ENCODE measurements at regions of chr11 and their contacts with region 1.

Region 1: DNA sequence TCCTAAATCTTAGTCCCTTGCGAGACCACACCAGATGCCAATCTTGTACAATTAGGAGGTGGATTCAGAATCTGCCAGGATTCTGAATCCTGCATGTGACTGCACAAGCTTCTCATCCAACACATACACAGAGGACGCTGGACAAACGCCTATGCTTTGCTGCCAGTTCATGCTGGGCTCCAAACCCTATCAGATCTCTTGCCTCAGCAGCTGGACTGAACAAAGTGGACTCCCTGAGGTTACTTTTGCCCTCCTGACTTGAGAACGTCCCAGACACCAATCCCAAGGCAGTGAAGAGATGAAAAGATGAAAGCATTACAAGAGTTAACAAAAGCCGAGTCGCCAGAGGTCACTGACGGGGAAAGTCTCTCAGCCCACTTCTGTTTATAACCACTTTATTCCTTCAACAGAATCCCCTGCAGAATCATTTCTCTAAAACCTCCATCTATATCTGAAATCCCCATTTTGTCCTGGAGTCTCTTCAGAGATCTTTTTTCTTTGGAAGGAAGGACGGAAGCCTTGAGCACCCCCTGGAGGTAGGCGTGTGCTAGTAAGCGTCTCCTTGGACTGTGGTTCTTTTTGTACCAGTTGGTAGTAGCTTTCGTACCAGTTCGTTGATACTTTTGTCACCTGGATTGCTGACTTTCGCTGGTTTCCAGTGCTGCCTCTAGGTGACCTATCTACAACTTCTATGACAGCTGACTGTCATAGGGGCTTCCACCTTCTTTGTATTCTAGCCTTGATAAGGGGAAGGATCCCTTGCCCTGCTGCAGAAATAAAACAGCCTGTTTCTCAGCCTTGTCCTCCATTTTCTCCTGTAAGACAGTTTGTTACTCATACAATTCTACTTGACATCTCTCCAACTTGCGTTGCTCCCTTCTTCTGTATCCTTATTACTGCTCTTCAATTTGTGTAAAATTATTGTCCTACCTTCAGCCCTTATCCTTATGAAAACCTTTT is 26.1 kb upstream of the EED start:
- DNase-seq: peak; percentile 76
- ATAC-seq: peak; percentile 63
- H3K4me3 ChIP-seq: peak overlapping the region; percentile 20; the same call in 1 of the 2 replicates
- H3K27ac ChIP-seq: peak overlapping the region; percentile 63
- H3K4me1 ChIP-seq: peaks cover 53% of the 10 kb centered on the region
- H3K27me3 ChIP-seq: no peaks in the 10 kb centered on the region
- CTCF ChIP-seq: peak; percentile 82 to 93 (median 92)
- EP300 ChIP-seq: no peak
- POLR2A ChIP-seq: no peak
- RAD21 ChIP-seq: peak; percentile 88

Region 2: DNA sequence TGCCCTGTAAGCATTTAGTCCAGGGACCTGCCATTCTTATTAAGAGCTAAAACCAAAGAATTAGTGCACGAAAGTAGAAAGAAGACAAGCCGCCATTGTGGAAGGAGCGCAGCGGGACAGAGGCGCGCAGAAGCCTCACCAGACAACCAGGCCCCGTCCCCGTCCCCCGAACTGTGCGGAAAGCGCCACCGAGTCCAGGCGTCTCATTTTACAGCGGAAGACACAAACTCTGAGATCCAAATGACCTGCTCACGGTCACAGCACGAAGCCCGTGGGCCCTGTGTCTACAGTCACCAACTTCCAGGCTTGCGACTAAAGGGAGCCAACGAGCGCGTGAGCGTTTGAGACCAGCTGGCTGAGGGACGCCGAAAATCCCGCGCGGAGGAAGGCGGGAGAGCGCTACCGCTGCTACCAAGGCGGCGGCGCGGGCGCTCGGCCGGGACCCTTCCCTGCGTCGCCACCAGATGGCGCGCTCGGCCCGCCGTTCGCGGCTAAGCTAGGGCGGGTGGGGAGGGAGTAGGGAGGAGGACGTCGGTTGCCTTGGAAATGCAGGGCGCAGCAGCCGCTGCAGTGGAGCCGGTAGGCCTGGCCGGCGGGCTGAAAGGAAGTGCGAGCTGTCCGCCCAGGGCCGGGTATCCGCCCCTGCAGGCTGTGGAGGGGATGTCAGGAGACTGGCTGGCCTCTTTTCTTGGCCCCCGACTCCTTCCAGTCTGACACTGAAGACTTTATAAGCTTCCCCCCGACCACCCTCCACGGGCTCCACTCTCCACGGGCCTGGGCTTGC is 363.7 kb before region 1 on chr11:
- CTCF ChIA-PET with region 1: interaction called, 6 read pairs
- POLR2A ChIA-PET with region 1: no interaction called
- RAD21 ChIA-PET with region 1: interaction called, 3 read pairs
- SMC1A ChIA-PET with region 1: interaction called, 3 read pairs
- in situ Hi-C with region 1: no loop called
- intact Hi-C with region 1: loop called (anchors 10 kb)
- DNase-seq: peak; percentile 57
- ATAC-seq: peak; percentile 100
- H3K4me3 ChIP-seq: peak overlapping the region; percentile 75
- H3K27ac ChIP-seq: peak overlapping the region; percentile 27; the same call in 1 of the 2 replicates
- H3K4me1 ChIP-seq: peaks cover 8% of the 10 kb centered on the region
- H3K27me3 ChIP-seq: no peaks in the 10 kb centered on the region
- CTCF ChIP-seq: peak; percentile 77 to 95 (median 82)
- EP300 ChIP-seq: no peak
- POLR2A ChIP-seq: peak; percentile 71
- RAD21 ChIP-seq: peak; percentile 83

Region 3: GRCh38 chr11:86041975-86042378 is 176.4 kb before region 1 on chr11:
- CTCF ChIA-PET with region 1: interaction called, 103 read pairs
- POLR2A ChIA-PET with region 1: interaction called, 3 read pairs
- RAD21 ChIA-PET with region 1: interaction called, 39 read pairs
- SMC1A ChIA-PET with region 1: interaction called, 78 read pairs
- in situ Hi-C with region 1: no loop called
- intact Hi-C with region 1: loop called (anchors 1 kb)
- DNase-seq: peak; percentile 60
- ATAC-seq: peak; percentile 83
- H3K4me3 ChIP-seq: no peak overlapping the region
- H3K27ac ChIP-seq: no peak overlapping the region
- H3K4me1 ChIP-seq: peaks cover 42% of the 10 kb centered on the region
- H3K27me3 ChIP-seq: no peaks in the 10 kb centered on the region
- CTCF ChIP-seq: peak; percentile 77 to 89 (median 81)
- EP300 ChIP-seq: no peak
- POLR2A ChIP-seq: no peak
- RAD21 ChIP-seq: peak; percentile 97

Region 4: DNA sequence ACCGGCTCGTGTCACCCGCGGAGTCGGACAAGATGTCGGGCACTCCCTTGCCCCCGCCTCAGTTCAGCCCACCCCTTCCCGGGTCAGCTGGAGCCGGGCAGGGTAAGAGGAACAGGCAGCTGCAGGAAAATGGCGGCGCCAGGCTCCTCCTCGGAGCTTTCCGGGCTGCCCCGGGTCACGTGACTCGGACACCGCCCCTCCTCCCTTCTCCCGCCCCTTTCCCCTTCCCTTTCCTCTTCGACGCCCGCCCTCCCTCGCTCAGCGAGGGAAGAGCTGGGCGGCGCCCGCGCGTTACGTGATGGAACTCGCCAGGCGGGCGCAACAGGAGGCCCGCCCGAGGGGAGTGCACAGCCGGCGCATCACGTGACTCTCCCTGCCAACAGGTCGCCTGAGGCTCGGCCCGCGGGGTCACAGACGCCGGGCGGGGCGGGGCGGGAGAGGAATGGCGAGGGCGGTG is 149.4 kb before region 1 on chr11 and contains the start of gene PICALM:
- CTCF ChIA-PET with region 1: interaction called, 14 read pairs
- POLR2A ChIA-PET with region 1: interaction called, 6 read pairs
- RAD21 ChIA-PET with region 1: interaction called, 28 read pairs
- SMC1A ChIA-PET with region 1: interaction called, 17 read pairs
- in situ Hi-C with region 1: no loop called
- intact Hi-C with region 1: loop called (anchors 1 kb)
- DNase-seq: peak; percentile 97
- ATAC-seq: peak; percentile 80
- H3K4me3 ChIP-seq: peak within 1 kb of the TSS; percentile 95
- H3K27ac ChIP-seq: peak within 1 kb of the TSS; percentile 99
- H3K4me1 ChIP-seq: peaks cover 10% of the 10 kb centered on the region
- H3K27me3 ChIP-seq: no peaks in the 10 kb centered on the region
- CTCF ChIP-seq: no peak
- EP300 ChIP-seq: peak in 1 of 2 experiments; percentile 14; a peak in 1 of 4 replicates
- POLR2A ChIP-seq: peak; percentile 81
- RAD21 ChIP-seq: no peak
- polyA plus RNA-seq, gene PICALM: 4.3 to 10.4 TPM

Region 5: DNA sequence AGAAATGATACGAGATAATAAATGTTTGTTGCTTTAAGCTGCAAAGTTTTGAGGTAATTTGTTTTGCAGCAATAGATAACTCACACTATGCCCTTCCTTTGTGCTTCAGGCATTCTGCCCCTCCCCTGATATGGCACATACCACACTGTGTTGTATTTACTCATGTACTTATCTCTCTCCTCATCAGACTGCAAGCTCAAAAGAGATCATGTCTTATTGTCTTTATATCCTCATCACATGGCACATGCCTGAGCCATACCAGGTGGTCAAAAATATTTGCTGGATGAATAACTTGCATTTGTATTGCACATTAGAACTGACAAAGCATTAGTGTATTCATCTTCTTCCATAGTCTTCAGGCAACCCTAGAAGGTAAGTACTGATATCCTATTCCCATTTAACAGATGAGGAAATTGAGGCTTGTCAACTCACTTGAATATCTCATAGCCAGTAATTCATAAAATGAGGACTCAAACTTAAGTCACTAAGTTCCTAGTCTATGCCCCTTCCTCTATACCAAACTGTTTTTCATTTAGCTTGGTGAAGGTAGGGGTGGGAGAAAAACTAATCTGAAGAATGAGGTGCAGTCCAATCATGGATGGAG is 57.8 kb before region 1 on chr11:
- CTCF ChIA-PET with region 1: no interaction called
- POLR2A ChIA-PET with region 1: no interaction called
- RAD21 ChIA-PET with region 1: no interaction called
- SMC1A ChIA-PET with region 1: no interaction called
- in situ Hi-C with region 1: no loop called
- intact Hi-C with region 1: no loop called
- DNase-seq: no peak
- ATAC-seq: no peak
- H3K4me3 ChIP-seq: no peak overlapping the region
- H3K27ac ChIP-seq: no peak overlapping the region
- H3K4me1 ChIP-seq: peaks cover 22% of the 10 kb centered on the region
- H3K27me3 ChIP-seq: no peaks in the 10 kb centered on the region
- CTCF ChIP-seq: no peak
- EP300 ChIP-seq: no peak
- POLR2A ChIP-seq: no peak
- RAD21 ChIP-seq: no peak

Region 6: DNA sequence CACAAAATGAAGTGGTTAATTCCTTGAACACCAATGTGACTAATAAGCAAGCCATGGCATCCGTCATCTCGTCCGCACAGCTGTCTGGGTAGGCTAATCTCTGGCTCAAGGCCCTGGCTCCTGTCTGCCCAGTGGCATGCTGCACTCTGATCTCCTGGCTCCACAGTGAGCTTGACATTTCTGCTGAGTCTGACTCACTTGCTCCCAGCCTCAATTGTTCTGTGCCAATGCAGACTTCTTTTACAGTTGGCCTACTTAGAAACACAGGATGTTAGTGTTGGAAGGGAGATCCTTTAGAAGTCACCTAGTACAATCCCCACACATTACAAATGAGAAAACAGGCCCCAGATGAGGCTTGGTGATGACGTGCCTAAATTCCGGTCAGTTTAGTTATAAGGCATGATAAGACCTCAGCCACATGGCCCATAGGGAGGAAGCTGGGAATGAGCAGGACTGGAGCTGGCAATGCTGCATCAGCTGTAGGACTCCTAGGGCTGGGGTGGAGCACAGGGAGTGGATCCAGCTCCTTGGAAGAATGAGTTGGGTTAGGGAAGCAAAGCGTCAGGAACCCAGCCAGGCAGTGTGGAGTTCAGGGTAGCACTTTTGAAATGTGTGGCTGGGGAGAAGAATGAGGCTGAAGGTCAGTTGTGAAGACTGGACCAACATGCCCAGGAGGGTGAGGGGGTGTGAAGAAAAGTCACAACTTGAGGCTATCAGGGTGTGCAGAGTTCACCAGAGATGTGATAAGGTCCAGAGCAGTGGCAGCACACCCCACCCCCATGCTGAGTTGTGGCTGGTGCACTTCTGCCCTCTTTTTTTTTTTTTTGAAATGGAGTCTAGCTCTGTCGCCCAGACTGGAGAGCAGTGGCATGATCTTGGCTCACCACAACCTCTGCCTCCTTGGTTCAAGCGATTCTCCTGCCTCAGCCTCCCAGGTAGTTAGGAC is 44.0 kb before region 1 on chr11:
- CTCF ChIA-PET with region 1: no interaction called
- POLR2A ChIA-PET with region 1: no interaction called
- RAD21 ChIA-PET with region 1: no interaction called
- SMC1A ChIA-PET with region 1: no interaction called
- in situ Hi-C with region 1: no loop called
- intact Hi-C with region 1: no loop called
- DNase-seq: no peak
- ATAC-seq: no peak
- H3K4me3 ChIP-seq: no peak overlapping the region
- H3K27ac ChIP-seq: no peak overlapping the region
- H3K4me1 ChIP-seq: no peaks in the 10 kb centered on the region
- H3K27me3 ChIP-seq: no peaks in the 10 kb centered on the region
- CTCF ChIP-seq: no peak
- EP300 ChIP-seq: no peak
- POLR2A ChIP-seq: no peak
- RAD21 ChIP-seq: no peak

Region 7: GRCh38 chr11:86202013-86202336 is 16.4 kb before region 1 on chr11:
- CTCF ChIA-PET with region 1: interaction called, 15 read pairs
- POLR2A ChIA-PET with region 1: interaction called, 3 read pairs
- RAD21 ChIA-PET with region 1: interaction called, 12 read pairs
- SMC1A ChIA-PET with region 1: interaction called, 22 read pairs
- in situ Hi-C with region 1: no loop called
- intact Hi-C with region 1: no loop called
- DNase-seq: no peak
- ATAC-seq: peak; percentile 85
- H3K4me3 ChIP-seq: peak overlapping the region; percentile 66
- H3K27ac ChIP-seq: peak overlapping the region; percentile 82
- H3K4me1 ChIP-seq: peaks cover 15% of the 10 kb centered on the region
- H3K27me3 ChIP-seq: no peaks in the 10 kb centered on the region
- CTCF ChIP-seq: no peak
- EP300 ChIP-seq: no peak
- POLR2A ChIP-seq: no peak
- RAD21 ChIP-seq: no peak

Region 8: DNA sequence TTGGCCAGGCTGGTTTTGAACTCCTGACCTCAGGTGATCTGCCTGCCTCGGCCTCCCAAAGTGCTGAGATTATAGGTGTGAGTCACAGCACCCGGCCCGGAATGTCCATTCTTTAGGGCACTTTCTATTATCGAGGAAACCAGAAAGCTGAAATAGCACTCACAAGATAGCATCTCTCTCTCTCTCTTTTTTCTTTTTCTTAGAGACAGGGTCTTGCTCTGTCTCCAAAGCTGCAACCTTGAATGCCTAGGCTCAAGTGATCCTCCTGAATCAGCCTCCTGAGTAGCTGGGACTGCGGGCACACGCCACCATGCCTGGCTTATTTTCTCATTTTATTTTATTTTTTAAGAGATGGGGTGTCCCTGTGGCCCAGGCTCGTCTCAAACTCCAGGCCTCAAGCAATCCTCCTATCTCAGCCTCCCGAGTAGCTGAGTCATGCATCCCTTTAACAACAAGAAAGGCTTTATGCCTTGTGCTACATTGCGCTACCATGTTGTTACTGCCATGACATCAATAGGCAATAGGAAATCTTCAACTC is 18.9 kb after region 1 on chr11:
- CTCF ChIA-PET with region 1: interaction called, 10 read pairs
- POLR2A ChIA-PET with region 1: interaction called, 7 read pairs
- RAD21 ChIA-PET with region 1: interaction called, 3 read pairs
- SMC1A ChIA-PET with region 1: interaction called, 21 read pairs
- in situ Hi-C with region 1: no loop called
- intact Hi-C with region 1: no loop called
- DNase-seq: no peak
- ATAC-seq: no peak
- H3K4me3 ChIP-seq: no peak overlapping the region
- H3K27ac ChIP-seq: no peak overlapping the region
- H3K4me1 ChIP-seq: no peaks in the 10 kb centered on the region
- H3K27me3 ChIP-seq: no peaks in the 10 kb centered on the region
- CTCF ChIP-seq: no peak
- EP300 ChIP-seq: no peak
- POLR2A ChIP-seq: no peak
- RAD21 ChIP-seq: no peak

Region 9: GRCh38 chr11:86291466-86292262 is 73.3 kb after region 1 on chr11:
- CTCF ChIA-PET with region 1: interaction called, 5 read pairs
- POLR2A ChIA-PET with region 1: no interaction called
- RAD21 ChIA-PET with region 1: interaction called, 7 read pairs
- SMC1A ChIA-PET with region 1: interaction called, 54 read pairs
- in situ Hi-C with region 1: no loop called
- intact Hi-C with region 1: loop called (anchors 2 kb)
- DNase-seq: peak; percentile 27
- ATAC-seq: peak; percentile 48
- H3K4me3 ChIP-seq: no peak overlapping the region
- H3K27ac ChIP-seq: no peak overlapping the region; the same call in 1 of the 2 replicates
- H3K4me1 ChIP-seq: peaks cover 41% of the 10 kb centered on the region
- H3K27me3 ChIP-seq: no peaks in the 10 kb centered on the region
- CTCF ChIP-seq: peak; percentile 70 to 79 (median 71)
- EP300 ChIP-seq: no peak
- POLR2A ChIP-seq: no peak
- RAD21 ChIP-seq: peak; percentile 95

Region 10: DNA sequence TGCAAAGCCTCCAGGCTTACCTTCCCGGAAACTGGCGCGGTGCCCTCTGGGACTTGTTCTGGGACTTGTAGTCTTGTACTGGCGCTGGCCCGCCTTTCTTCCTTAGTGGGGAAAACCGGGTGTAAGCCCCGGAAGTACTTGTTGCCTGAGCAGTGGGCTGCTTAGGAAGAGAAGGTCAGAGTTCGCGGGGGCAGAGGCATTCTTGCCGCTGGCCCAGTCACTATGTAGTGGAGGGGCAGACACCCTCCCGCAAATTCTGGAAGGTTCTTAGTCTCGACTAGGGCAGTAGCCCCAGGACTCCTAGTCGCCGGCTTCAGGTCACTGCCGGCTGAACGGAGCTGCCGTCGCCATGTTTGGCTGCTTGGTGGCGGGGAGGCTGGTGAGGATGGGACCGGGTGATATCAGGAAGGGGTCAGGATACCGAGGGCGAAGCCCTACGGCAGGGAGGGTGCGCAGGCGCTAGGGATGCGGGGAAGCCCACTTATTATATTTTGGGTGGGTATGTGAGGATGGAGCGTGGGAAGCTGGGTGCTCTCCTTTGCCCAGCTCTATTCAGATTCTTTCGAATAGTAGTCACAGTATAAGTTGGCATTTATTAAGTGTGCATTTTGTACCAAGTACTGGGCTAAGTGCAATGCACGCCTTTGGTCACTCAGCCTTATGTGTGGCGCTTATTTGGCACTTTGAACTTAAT is 83.8 kb after region 1 on chr11 and contains the start of gene HIKESHI:
- CTCF ChIA-PET with region 1: no interaction called
- POLR2A ChIA-PET with region 1: no interaction called
- RAD21 ChIA-PET with region 1: no interaction called
- SMC1A ChIA-PET with region 1: no interaction called
- in situ Hi-C with region 1: no loop called
- intact Hi-C with region 1: no loop called
- DNase-seq: peak; percentile 76
- ATAC-seq: peak; percentile 99
- H3K4me3 ChIP-seq: peak within 1 kb of the TSS; percentile 87
- H3K27ac ChIP-seq: peak within 1 kb of the TSS; percentile 87
- H3K4me1 ChIP-seq: 0 out of 2 replicates have a peak, but pooled peaks cover 3% of the 10 kb centered on the region
- H3K27me3 ChIP-seq: no peaks in the 10 kb centered on the region
- CTCF ChIP-seq: no peak
- EP300 ChIP-seq: no peak
- POLR2A ChIP-seq: peak; percentile 91
- RAD21 ChIP-seq: no peak
- polyA plus RNA-seq, gene HIKESHI: 156 to 228 TPM

Measured in GM12878 (cell line).